Heart left ventricle (tissue), 16 donors: ENCODE measurements at regions of chr2 and their contacts with region 1.

Region 1: DNA sequence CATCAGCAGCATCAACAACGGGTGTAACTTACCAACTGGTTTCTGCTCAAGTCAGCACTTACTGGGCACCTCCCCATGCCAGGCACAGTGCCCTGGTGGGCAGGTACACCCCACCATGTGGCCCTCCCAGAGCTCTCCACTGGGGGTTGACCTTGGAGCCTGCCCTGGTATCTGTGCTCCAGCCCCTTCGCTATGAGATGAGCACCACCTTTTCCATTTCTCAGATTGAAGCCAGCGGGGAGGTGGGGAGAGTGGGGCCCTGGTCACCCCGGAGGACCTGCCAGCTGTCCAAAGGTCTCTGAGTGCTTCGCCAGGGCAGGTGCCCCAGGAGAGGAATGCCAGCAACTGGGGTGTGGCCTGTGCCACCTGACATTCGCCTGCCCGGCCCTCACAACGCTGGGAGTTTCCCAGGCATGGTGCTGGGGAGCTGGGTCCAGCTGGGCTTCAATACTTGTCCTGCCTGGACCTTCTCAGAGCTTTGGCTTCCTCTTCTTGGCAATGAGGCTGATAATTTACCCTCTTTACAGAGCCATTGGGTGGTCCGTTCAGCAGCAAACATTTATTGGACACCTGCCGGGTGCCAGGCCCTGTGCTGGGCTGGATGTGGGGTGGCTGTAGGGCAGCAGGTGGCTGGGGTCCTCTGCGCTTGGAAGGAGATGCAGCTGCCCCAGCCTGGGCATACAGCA is 5.9 kb upstream of the ZAP70 start:
- DNase-seq: no peak
- ATAC-seq: no peak
- H3K4me3 ChIP-seq: no peak overlapping the region
- H3K27ac ChIP-seq: no peak overlapping the region
- H3K4me1 ChIP-seq: peaks cover 0 to 3% (median 0%) of the 10 kb centered on the region in 12 donors
- H3K27me3 ChIP-seq: no peaks in the 10 kb centered on the region
- CTCF ChIP-seq: no peak
- POLR2A ChIP-seq: no peak

Region 2: GRCh38 chr2:97740590-97741182 is 33.2 kb after region 1 on chr2:
- intact Hi-C with region 1: loop called in 5 of 10 experiments (anchors 5 kb)
- DNase-seq: peak in 2 of 5 donors; percentile 31 to 45
- ATAC-seq: peak in 1 of 4 donors; percentile 28
- H3K4me3 ChIP-seq: no peak overlapping the region
- H3K27ac ChIP-seq: no peak overlapping the region
- H3K4me1 ChIP-seq: peaks cover 0 to 26% (median 6%) of the 10 kb centered on the region in 12 donors
- H3K27me3 ChIP-seq: no peaks in the 10 kb centered on the region
- CTCF ChIP-seq: peak; percentile 48 to 69 (median 61)
- POLR2A ChIP-seq: peak in 1 of 2 donors; percentile 13

Region 3: DNA sequence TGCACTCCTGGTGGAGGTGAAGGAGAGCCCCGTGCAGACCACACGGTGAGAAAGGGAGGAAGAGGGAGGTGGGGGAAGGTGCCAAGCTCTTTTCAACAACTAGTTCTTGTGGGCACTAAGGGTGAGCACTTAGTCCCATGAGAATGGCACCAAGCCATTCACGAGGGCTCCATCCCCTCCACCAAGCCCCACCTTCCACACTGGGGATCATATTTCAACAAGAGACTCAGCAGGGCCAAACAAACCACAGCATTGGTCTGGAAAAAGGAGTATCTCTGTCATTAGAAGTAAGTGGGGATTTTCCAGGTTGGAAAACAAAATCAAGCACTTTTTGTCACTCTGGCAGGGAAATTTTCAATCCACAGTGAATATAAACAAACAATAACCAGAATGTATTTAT is 44.2 kb after region 1 on chr2:
- intact Hi-C with region 1: loop called in 7 of 10 experiments (anchors 2 to 5 kb)
- DNase-seq: peak in 1 of 5 donors; percentile 23
- ATAC-seq: peak; percentile 36 to 70 (median 53)
- H3K4me3 ChIP-seq: no peak overlapping the region
- H3K27ac ChIP-seq: no peak overlapping the region
- H3K4me1 ChIP-seq: peaks cover 0 to 46% (median 12%) of the 10 kb centered on the region in 12 donors
- H3K27me3 ChIP-seq: no peaks in the 10 kb centered on the region
- CTCF ChIP-seq: no peak
- POLR2A ChIP-seq: no peak

Region 4: GRCh38 chr2:97870396-97870843 is 162.9 kb after region 1 on chr2:
- intact Hi-C with region 1: no loop called
- DNase-seq: peak in 1 of 5 donors; percentile 18
- ATAC-seq: peak; percentile 82 to 92 (median 90)
- H3K4me3 ChIP-seq: no peak overlapping the region
- H3K27ac ChIP-seq: peak overlapping the region; percentile 75 to 86 (median 81)
- H3K4me1 ChIP-seq: peaks cover 0 to 56% (median 33%) of the 10 kb centered on the region in 12 donors
- H3K27me3 ChIP-seq: no peaks in the 10 kb centered on the region
- CTCF ChIP-seq: no peak
- POLR2A ChIP-seq: no peak